B cell (primary cell): ENCODE measurements at regions of chr5 and their contacts with region 1.

Region 1: DNA sequence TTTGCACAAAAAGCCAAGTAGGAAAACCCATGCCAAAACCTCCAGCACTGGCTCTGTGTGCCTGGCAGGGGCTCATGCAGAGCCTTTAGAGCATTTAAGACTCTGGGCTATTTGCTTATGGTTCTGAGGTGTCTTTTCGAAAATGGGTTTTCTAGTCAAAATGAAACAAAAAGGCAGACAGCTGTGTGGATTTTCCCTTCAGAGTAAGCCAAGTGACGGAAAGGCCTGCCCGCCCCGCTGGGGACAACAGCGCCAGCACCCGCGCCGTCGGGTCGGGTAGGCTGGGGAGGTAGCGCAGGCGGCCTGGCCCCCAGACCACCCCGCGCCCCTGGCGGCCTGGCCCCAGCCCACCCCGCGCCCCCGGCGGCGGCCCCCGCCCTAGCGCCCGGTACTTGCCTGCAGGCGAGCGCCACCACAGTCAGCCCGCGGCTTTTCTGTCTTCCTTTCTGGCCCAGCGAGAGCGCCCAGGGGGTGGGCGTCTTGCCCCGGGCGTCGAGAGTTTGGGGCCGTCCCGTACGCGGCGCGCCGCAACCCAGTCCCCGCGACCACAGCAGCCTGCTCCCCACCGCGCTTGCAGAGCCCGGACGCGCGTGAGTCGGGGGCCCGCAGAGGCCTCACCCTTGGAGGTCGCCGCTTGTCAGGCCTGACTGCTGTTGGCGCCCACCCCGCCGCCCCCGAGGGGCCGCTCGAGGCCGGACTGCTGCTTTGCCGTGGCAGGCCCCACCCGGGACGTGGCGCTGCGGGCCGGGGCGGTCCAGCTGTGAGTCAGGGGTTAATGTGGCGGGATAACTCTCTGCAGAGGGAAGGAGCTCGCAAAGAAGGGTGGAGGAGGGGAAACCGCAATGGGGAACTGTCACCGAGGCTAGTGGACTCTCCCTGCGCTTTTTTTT is at the start of gene TICAM2:
- DNase-seq: peak; percentile 86
- ATAC-seq: peak; percentile 80
- H3K4me3 ChIP-seq: peak within 1 kb of the TSS; percentile 51 to 87 (median 82)
- H3K4me3 Mint-ChIP-seq: peak within 1 kb of the TSS; percentile 94
- H3K27ac ChIP-seq: peak within 1 kb of the TSS; percentile 71 to 91
- H3K27ac Mint-ChIP-seq: peak within 1 kb of the TSS; percentile 98
- H3K4me1 ChIP-seq: peaks cover 38% of the 10 kb centered on the region in 2 donors
- H3K4me1 Mint-ChIP-seq: peaks cover 43% of the 10 kb centered on the region
- H3K27me3 ChIP-seq: no peaks in the 10 kb centered on the region
- H3K27me3 Mint-ChIP-seq: no peaks in the 10 kb centered on the region
- CTCF ChIP-seq: peak; percentile 54
- total RNA-seq, gene TICAM2: 4.9 and 5.4 TPM in 2 replicates

Region 2: DNA sequence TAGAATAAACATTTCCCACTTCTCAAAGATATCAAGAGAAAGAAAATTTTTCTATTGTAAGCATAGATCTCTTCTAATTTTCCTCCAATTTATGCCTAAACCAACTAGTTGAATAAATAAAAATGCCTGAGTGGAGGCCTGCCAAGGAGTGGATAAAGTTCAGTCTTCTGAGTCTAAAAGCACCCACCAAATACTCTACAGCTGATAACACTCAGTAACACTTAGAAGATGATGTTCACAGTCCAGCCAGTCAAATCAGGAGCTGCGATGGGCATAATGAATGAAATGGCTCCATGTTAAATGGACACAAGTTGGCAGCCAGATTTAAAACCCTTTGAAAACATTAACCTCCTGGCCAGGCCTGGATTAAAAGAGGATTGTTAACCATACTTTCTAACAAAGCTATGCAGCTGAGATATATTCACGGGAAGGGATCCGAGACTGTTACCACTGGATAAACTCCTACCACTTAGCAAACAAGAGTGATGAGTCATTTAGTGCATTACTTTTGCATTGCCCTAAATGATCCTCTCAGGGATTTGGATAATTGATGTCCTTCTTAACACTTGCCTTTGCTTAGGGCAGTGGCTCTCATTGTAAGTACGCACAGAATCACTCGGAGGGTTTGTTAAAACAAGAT is 241.8 kb before region 1 on chr5:
- CTCF ChIA-PET with region 1: no interaction called
- POLR2A ChIA-PET with region 1: interaction called, 10 read pairs
- intact Hi-C with region 1: no loop called
- DNase-seq: no peak
- ATAC-seq: no peak
- H3K4me3 ChIP-seq: no peak overlapping the region
- H3K4me3 Mint-ChIP-seq: no peak overlapping the region
- H3K27ac ChIP-seq: no peak overlapping the region
- H3K27ac Mint-ChIP-seq: no peak overlapping the region
- H3K4me1 ChIP-seq: no peaks in the 10 kb centered on the region
- H3K4me1 Mint-ChIP-seq: no peaks in the 10 kb centered on the region
- H3K27me3 ChIP-seq: no peaks in the 10 kb centered on the region
- H3K27me3 Mint-ChIP-seq: peaks cover 7% of the 10 kb centered on the region
- CTCF ChIP-seq: no peak

Region 3: DNA sequence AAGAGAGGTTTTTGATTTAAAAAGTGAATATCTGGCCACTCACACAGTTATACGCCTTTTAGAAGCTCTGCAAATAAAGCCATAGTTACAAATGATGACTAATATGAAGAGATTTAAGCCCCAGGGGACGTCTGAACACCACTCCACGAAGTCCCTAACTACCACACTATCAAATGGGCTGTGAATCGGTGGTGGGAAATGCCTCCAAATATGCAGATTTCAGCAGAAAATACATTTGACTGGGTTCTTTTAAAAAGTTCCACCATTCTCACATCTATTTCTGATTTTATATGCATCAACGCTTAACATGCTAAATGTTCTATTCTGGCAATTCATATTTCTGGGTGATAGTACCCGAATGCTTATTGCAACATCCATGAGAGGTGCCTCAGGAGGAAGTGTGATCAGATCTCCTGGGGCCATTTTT is 22.2 kb before region 1 on chr5:
- CTCF ChIA-PET with region 1: interaction called, 9 read pairs
- POLR2A ChIA-PET with region 1: no interaction called
- intact Hi-C with region 1: loop called (anchors 2 kb)
- DNase-seq: peak; percentile 24
- ATAC-seq: peak; percentile 74
- H3K4me3 ChIP-seq: no peak overlapping the region
- H3K4me3 Mint-ChIP-seq: peak overlapping the region; percentile 32
- H3K27ac ChIP-seq: no peak overlapping the region
- H3K27ac Mint-ChIP-seq: peak overlapping the region; percentile 58
- H3K4me1 ChIP-seq: peaks cover 15 to 17% of the 10 kb centered on the region in 2 donors
- H3K4me1 Mint-ChIP-seq: peaks cover 33% of the 10 kb centered on the region
- H3K27me3 ChIP-seq: no peaks in the 10 kb centered on the region
- H3K27me3 Mint-ChIP-seq: no peaks in the 10 kb centered on the region
- CTCF ChIP-seq: no peak